WTC11 (cell line): ENCODE measurements at regions of chr10 and their contacts with region 1.

Region 1: DNA sequence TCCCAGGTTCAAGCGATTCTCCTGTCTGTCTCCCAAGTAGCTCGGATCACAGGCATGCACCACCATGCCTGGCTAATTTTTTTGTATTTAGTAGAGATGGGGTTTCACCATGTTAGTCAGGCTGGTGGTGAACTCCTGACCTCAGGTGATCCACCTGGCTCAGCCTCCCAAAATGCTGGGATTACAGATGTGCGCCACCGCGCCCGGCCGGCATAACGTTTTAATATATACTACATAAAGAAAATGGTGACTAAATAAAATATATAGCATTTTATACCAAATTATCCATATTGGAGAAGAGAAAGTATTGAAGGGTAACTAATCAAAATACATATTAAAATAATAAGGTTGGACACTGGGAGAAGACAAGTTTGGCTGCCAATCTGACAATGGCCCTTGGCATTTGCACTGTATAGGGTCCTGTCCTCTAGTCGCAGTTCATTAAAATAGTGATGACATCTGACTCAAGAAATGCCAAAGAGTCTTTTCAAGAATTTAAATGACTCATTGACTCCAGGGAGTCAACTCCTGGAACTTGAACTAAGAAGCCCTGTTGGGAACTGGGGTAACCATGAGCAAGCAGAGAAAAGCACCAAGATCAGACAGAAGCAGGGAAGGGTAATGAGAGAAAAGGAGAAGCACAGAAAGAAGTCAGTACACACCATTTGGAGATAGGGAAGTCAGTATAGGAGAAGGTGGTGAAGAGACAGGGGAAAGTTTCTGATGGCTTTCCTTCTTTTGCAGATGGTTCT is 91.1 kb downstream of the CH25H start:
- DNase-seq: no peak
- ATAC-seq: no peak
- H3K4me3 Mint-ChIP-seq: no peak overlapping the region
- H3K27ac Mint-ChIP-seq: no peak overlapping the region
- H3K4me1 Mint-ChIP-seq: no peaks in the 10 kb centered on the region
- H3K27me3 Mint-ChIP-seq: no peaks in the 10 kb centered on the region
- CTCF ChIP-seq: no peak

Region 2: GRCh38 chr10:89029785-89030437 is 86.1 kb before region 1 on chr10:
- CTCF ChIA-PET with region 1: interaction called, 18 read pairs
- POLR2A ChIA-PET with region 1: interaction called, 5 read pairs
- DNase-seq: peak; percentile 67
- ATAC-seq: peak; percentile 85
- H3K4me3 Mint-ChIP-seq: no peak overlapping the region
- H3K27ac Mint-ChIP-seq: no peak overlapping the region
- H3K4me1 Mint-ChIP-seq: peaks cover 20% of the 10 kb centered on the region
- H3K27me3 Mint-ChIP-seq: no peaks in the 10 kb centered on the region
- CTCF ChIP-seq: peak; percentile 79

Region 3: GRCh38 chr10:89074120-89074519 is 41.9 kb before region 1 on chr10:
- CTCF ChIA-PET with region 1: no interaction called
- POLR2A ChIA-PET with region 1: no interaction called
- DNase-seq: no peak
- ATAC-seq: no peak
- H3K4me3 Mint-ChIP-seq: no peak overlapping the region
- H3K27ac Mint-ChIP-seq: no peak overlapping the region
- H3K4me1 Mint-ChIP-seq: peaks cover 5% of the 10 kb centered on the region
- H3K27me3 Mint-ChIP-seq: no peaks in the 10 kb centered on the region
- CTCF ChIP-seq: no peak